Activated CD4-positive, alpha-beta T cell treated with anti-CD3 and anti-CD28 coated beads, Interleukin-2, amount 10 ng/mL, durations not matched to agents 24 days and 14 days (primary cell): ENCODE measurements at regions of chr20 and their contacts with region 1.

Region 1: DNA sequence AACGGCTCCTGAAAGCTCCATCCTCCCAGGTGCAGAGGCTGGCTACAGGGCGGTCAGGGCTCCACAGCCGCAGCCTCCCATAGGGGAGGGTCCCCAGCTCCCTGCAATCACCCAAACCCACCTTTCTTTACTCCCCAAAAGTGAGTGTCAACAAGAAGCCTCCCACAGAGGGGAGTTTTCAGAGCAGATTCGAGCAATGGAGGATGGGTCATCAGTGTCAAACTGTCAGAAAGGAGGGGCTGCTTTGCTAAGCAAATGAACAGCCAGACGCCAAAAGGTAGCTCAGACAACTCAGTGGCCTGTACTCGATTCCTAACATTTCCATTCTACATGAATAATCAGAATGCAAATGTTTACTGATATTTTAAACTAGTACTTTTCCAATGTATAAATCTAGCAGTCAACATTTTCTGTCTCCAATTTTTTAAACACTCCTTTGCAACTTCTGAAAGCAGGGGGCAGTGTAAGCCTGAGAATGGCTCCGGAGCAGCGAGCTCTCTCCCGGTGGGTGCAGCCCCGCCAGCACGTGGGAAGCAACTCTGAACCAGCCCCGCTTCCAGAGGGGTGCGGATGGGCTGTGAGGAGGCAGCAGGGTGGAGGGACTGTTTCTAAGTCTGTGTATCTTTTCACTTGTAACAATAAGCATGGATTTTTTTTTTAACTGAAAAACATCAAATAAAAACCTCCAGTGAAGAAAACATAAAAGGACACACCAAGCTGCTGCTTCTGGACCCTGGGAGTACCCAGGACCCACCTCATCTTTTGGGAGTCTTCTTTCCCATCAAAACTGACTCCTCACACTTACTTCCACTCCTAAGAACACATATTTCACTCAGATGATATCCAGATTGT is 54.9 kb downstream of the TAF4 start:
- DNase-seq: peak; percentile 89
- H3K4me3 Mint-ChIP-seq: no peak overlapping the region
- H3K27ac Mint-ChIP-seq: no peak overlapping the region
- H3K4me1 Mint-ChIP-seq: peaks cover 5% of the 10 kb centered on the region
- H3K27me3 Mint-ChIP-seq: no peaks in the 10 kb centered on the region

Region 2: DNA sequence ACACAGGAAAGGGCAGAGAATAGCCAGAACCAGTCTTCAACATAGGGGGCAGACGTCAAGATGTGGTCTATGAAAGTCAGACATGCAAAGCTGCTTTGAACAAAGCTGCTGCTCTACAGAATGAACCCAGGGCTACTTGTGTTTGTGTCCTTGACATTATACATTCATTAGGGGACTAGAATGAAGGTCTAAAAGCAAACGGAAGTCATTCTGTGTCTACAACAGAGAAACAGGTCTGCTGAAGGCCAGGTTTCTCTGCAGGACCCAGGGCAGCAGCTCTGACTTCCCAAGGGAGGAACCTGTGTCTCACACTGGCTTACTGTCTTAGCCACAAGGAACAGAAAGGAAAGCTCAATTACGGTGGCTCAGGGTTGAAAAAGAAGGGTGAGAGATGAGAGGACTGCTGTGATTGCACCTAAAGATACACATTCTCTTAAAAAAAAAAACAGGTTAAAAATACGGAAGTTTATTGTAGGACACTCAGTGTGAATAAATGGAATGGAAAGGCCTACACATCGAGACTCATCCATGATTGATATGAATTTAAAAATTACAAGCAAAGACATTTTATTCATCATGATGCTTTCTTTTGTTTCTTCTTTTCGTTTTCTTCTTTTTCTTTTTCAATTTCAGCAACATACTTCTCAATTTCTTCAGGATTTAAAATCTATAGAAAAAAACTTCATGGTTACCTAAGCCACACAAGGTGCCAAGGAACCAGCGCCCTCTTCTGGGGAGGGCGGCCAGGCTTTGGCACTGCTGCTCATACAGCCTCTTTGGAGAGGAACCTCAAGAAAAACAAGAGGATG is 125.7 kb after region 1 on chr20:
- intact Hi-C with region 1: loop called (anchors 2 kb)
- DNase-seq: peak; percentile 91
- H3K4me3 Mint-ChIP-seq: no peak overlapping the region
- H3K27ac Mint-ChIP-seq: peak overlapping the region; percentile 65
- H3K4me1 Mint-ChIP-seq: peaks cover 33% of the 10 kb centered on the region
- H3K27me3 Mint-ChIP-seq: no peaks in the 10 kb centered on the region